Astrocyte of the cerebellum (primary cell): ENCODE measurements at regions of chr2 and their contacts with region 1.

Region 1: DNA sequence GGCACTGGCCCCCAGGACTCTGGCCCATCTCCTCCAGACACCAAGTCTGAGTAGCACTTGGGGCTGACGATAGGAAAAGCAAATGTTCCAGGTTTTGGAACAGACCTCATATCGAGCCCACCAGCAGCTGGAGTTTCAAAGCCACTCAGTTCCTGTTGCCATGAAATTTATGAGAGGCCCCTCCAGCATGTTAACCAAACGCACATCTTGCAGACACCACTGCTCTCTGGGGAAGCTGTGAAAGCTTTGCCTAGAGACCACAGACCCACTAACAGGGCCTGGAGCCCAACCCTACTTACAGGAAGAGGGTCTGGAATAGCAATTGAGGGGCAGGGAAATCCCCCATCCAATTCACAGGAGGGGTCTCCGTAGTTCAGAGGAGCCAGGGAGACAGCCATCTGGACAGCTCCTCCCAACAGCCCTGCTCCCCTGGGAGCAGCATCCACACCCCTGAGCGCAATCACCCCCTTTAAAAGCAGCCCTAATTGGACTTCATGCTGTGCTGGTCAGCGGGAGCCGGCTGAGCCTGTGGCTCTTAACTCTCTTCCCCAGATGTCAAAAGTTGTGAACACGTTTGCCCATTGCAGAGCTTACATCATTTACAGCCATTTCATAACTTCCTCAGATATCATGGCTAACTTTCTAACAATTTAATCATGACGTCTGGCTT is 81.3 kb downstream of the TGFA start:
- DNase-seq: no peak
- H3K4me3 ChIP-seq: no peak overlapping the region
- CTCF ChIP-seq: no peak

Region 2: DNA sequence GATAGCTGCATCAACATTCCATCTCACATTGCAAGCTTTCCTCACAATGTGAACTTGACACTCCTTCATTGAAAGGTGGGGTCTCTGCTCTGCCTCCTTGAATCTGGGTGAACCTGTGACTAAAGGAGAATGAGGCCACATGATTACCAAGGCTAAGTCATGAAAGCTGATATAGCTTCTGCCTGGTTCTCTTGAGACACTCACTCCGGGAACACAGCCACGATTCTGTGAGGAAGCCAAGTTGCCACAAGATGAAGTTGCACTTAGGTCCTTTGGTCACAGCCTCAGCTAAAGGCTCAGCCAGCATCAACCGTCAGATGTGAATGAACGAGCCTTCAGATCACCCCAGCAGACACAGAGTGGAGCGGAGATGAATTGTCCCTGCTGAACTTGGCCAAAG is 75.7 kb before region 1 on chr2:
- in situ Hi-C with region 1: loop called (anchors 5 kb)
- DNase-seq: no peak
- H3K4me3 ChIP-seq: no peak overlapping the region
- CTCF ChIP-seq: no peak

Region 3: DNA sequence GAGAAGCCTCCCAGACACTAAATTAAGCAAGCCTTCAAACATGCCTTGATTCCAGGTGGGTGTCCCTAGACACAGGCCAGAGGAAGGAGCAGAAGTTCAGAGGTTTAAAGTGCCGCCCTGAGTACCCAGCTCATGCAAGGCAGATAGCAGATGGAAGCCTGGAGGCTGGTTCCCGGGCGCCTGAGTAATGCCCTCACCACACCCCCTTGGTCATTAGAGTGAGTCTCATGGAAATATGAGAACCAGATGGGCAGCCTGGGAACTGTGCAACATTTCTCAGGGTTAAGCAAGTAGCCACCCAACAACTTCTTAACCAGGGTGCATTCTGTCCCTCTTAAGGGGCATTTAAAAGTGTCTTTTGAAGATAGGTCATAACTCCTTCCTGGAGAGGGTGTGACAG is 37.2 kb after region 1 on chr2:
- in situ Hi-C with region 1: no loop called
- DNase-seq: no peak
- H3K4me3 ChIP-seq: no peak overlapping the region
- CTCF ChIP-seq: no peak